MCF 10A (cell line): ENCODE measurements at regions of chr10 and their contacts with region 1.

Region 1: DNA sequence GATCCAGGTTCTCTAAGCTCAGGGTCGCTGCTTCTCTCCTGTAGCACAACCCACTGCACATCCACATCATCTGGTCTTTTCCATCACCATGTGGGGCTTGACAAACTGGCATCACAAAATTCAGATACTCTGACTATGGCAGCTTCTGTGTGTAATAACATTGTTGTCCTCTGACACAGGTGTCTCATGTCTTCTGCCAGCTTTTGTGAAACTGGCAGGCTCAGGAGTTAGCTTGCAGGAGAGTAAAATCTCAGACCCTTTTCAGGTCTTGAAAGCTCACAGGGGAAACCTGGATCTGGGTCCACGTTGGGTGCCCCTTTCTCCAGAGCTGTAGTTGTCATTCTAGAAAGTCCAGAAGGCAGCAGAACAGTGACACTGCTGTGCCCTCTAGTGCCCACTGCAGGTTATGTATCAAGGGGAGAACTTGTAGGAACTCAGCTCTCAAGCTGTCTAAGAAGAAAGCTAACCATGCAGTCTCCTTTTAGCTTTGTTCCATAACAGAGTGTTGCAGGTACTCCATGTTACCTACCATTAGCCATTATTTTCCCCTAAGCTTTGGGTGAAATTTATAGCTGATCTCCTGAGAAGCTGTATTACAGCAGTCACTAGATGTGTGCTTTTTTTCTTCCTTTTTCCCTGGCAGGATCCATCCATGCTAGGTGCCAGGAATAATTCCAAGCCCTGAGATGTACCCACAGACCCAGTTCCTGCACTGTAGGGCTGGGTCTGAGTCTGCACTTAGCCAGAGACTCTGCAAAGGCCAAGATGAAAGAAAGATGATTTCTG is 102.7 kb downstream of the ZNF248 start:
- DNase-seq: no peak
- H3K4me3 Mint-ChIP-seq: no peak overlapping the region
- H3K27ac Mint-ChIP-seq: no peak overlapping the region
- H3K4me1 Mint-ChIP-seq: no peaks in the 10 kb centered on the region
- H3K27me3 Mint-ChIP-seq: no peaks in the 10 kb centered on the region
- CTCF ChIP-seq: peak; percentile 33

Region 2: DNA sequence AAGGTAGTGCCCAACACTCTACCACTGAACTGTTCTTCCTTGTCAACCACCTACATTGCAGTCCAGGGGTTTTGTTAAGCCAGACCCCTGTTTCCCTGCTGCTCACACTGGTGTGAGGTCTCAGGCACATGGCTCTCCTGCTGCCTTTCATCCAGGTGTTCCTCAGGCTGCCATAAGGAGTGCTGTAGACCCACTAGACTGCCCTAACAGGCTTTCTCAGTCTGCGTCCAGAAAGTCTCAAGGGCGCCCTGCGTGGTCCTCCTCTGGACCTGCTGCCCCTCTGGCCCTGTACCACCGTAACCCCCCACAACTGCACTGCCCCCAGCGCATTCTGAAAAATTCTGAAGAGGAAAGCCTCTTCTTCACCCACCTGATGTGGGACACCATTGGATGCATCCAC is 855.1 kb before region 1 on chr10:
- CTCF ChIA-PET with region 1: interaction called, 4 read pairs
- POLR2A ChIA-PET with region 1: no interaction called
- intact Hi-C with region 1: loop called (anchors 5 kb)
- DNase-seq: no peak
- H3K4me3 Mint-ChIP-seq: no peak overlapping the region
- H3K27ac Mint-ChIP-seq: no peak overlapping the region
- H3K4me1 Mint-ChIP-seq: no peaks in the 10 kb centered on the region
- H3K27me3 Mint-ChIP-seq: peaks cover 11% of the 10 kb centered on the region
- CTCF ChIP-seq: no peak

Region 3: DNA sequence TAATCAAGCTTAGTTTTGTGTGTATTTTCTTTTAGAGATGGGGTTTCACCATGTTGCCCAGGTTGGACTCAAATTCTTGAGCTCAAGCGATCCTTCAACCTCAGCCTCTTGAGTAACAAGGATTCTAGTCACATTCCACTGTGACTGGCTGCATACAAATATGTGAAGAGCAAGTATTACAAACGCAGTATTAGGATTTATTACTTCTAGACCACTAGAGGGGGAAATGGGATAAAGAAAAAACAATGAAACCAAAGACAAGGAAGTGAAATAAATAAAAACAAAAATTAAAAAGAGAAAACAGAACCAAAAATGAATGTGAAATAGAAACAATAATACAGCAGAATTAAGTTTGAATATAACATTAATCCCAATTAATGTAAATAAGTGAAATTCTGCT is 320.6 kb before region 1 on chr10:
- CTCF ChIA-PET with region 1: interaction called, 20 read pairs
- POLR2A ChIA-PET with region 1: interaction called, 3 read pairs
- intact Hi-C with region 1: no loop called
- DNase-seq: no peak
- H3K4me3 Mint-ChIP-seq: no peak overlapping the region
- H3K27ac Mint-ChIP-seq: no peak overlapping the region
- H3K4me1 Mint-ChIP-seq: peaks cover 9% of the 10 kb centered on the region
- H3K27me3 Mint-ChIP-seq: no peaks in the 10 kb centered on the region
- CTCF ChIP-seq: peak; percentile 33

Region 4: GRCh38 chr10:37495415-37495814 is 259.3 kb before region 1 on chr10:
- CTCF ChIA-PET with region 1: interaction called, 29 read pairs
- POLR2A ChIA-PET with region 1: no interaction called
- intact Hi-C with region 1: no loop called
- DNase-seq: no peak
- H3K4me3 Mint-ChIP-seq: no peak overlapping the region
- H3K27ac Mint-ChIP-seq: no peak overlapping the region
- H3K4me1 Mint-ChIP-seq: peaks cover 2% of the 10 kb centered on the region
- H3K27me3 Mint-ChIP-seq: no peaks in the 10 kb centered on the region
- CTCF ChIP-seq: peak; percentile 37

Region 5: GRCh38 chr10:37520488-37520887 is 234.2 kb before region 1 on chr10:
- CTCF ChIA-PET with region 1: interaction called, 40 read pairs
- POLR2A ChIA-PET with region 1: interaction called, 6 read pairs
- intact Hi-C with region 1: loop called (anchors 2 kb)
- DNase-seq: no peak
- H3K4me3 Mint-ChIP-seq: no peak overlapping the region
- H3K27ac Mint-ChIP-seq: no peak overlapping the region
- H3K4me1 Mint-ChIP-seq: no peaks in the 10 kb centered on the region
- H3K27me3 Mint-ChIP-seq: no peaks in the 10 kb centered on the region
- CTCF ChIP-seq: no peak

Region 6: GRCh38 chr10:37563107-37563714 is 191.5 kb before region 1 on chr10:
- CTCF ChIA-PET with region 1: no interaction called
- POLR2A ChIA-PET with region 1: no interaction called
- intact Hi-C with region 1: no loop called
- DNase-seq: no peak
- H3K4me3 Mint-ChIP-seq: no peak overlapping the region
- H3K27ac Mint-ChIP-seq: no peak overlapping the region
- H3K4me1 Mint-ChIP-seq: no peaks in the 10 kb centered on the region
- H3K27me3 Mint-ChIP-seq: no peaks in the 10 kb centered on the region
- CTCF ChIP-seq: no peak

Region 7: DNA sequence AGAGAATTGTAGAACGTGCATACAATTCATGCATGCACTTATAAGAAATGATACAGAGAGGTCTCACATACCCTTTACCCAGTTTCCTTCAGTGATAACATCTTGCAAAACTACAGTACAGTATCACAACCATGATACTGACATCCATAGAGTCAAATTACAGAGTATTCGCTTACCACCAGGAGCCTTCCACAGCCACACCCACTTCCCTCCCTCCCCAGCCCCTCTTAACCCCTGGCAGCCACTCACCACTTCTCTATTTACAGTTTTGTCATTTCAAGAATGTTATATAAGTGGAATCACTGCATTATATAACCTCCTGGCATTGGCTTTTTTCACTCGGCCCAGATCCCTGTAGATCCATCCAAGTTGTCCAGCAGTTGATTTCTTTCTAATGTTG is 41.1 kb before region 1 on chr10:
- CTCF ChIA-PET with region 1: interaction called, 10 read pairs
- POLR2A ChIA-PET with region 1: no interaction called
- intact Hi-C with region 1: no loop called
- DNase-seq: no peak
- H3K4me3 Mint-ChIP-seq: no peak overlapping the region
- H3K27ac Mint-ChIP-seq: no peak overlapping the region
- H3K4me1 Mint-ChIP-seq: no peaks in the 10 kb centered on the region
- H3K27me3 Mint-ChIP-seq: no peaks in the 10 kb centered on the region
- CTCF ChIP-seq: no peak

Region 8: GRCh38 chr10:37739181-37739580 is 15.6 kb before region 1 on chr10:
- CTCF ChIA-PET with region 1: interaction called, 21 read pairs
- POLR2A ChIA-PET with region 1: no interaction called
- intact Hi-C with region 1: no loop called
- DNase-seq: no peak
- H3K4me3 Mint-ChIP-seq: no peak overlapping the region
- H3K27ac Mint-ChIP-seq: no peak overlapping the region
- H3K4me1 Mint-ChIP-seq: no peaks in the 10 kb centered on the region
- H3K27me3 Mint-ChIP-seq: no peaks in the 10 kb centered on the region
- CTCF ChIP-seq: no peak